Left ventricle myocardium inferior (tissue), 1 donor: ENCODE measurements at regions of chr1 and their contacts with region 1.

Region 1: DNA sequence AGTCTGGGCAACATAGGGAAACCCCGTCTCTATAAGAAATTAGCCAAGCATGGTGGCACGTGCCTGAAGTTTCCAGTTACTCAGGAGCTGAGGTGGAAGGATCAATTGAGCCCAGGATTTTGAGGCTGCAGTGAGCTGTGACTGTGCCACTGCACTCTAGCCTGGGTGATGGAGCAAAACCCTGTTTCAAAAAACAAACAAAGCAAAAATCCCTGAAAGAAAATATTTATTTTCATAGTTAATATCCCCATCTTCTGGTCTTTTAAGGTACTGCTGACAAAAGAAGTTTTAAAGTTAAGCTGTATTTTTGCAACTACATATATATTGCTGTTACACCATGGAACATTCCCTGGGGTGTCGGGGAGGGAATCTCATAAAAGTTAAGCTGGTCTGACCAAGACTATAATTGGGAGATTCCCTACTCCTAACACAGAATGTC is 26.0 kb downstream of the VAMP4 start:
- DNase-seq: no peak
- H3K4me3 ChIP-seq: no peak overlapping the region
- H3K27ac ChIP-seq: peak overlapping the region; percentile 48
- H3K4me1 ChIP-seq: peaks cover 28% of the 10 kb centered on the region
- H3K27me3 ChIP-seq: no peaks in the 10 kb centered on the region
- CTCF ChIP-seq: peak; percentile 68

Region 2: DNA sequence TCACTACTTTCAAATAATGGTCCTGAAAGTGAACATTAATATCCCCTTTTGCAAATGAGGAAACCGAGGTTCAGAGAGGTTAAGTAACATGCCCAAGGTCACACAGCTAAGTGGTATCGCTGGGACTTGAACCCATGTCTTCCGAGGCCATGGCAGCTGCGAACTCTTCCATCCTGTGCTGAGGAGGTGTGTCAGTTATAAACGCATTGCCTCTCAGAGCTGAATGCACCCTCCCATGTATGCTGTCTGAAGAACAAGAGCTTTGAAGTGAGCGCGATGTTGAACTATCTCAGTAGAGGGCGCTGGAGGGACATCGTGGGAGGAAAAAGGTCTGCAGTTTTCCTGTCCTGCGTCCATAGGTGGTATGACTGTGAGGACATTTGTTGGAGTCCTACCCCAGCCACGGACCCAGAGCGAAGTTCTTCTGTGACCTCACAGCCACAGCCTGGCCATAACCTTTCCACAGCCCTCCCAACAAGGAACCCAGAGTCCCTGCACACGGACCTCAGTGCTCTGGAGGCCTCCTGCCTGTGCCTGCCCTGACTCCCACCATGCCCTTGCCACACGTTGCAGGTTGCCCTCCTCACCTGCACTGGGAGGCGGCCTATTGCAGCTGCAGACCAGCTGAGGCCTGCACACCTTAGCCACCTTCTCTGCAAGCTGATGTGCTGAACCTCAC is 70.9 kb before region 1 on chr1:
- intact Hi-C with region 1: loop called (anchors 10 kb)
- DNase-seq: peak; percentile 72
- H3K4me3 ChIP-seq: peak overlapping the region; percentile 39
- H3K27ac ChIP-seq: peak overlapping the region; percentile 91
- H3K4me1 ChIP-seq: peaks cover 20% of the 10 kb centered on the region
- H3K27me3 ChIP-seq: no peaks in the 10 kb centered on the region
- CTCF ChIP-seq: peak; percentile 87